ENCODE measurements at regions of chr3 and their contacts with region 1.

Region 1: DNA sequence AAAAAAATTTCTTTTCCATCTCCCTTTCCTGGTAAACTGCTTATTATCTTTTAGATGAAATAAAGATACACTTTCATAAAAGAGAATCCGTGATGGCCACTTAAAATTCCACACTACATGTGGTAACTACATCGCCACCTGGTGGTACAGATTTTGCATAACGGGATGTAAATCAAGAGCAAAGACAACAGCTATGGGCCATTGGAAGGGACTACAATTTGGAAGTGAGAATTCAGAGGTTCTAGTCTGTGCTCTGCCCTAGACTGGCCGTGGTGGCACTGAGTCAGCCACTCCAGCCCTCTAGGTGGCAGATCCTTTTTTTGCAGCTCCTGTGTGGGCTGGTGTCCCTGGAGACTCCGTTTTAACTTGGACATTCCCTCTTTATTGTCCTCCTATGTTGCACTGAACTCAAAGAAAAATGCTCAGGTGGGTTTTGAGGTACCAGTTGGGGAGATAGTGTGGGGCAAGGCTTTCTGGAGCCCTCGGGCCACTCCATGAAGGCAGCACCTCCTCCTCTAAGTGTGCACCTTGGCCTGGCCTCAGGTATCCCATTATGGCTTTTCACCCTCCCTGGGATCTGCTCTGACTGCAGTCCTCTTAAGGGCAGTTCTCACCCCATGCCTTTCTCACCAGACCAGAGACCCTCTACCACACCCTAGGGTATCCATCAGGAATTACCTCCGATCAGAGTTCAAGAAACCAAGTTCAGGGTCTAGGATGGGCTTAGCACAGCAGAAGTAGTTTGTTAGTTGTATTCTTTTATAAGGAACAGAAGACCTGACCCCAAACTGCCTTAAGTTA is 54.9 kb downstream of the SPSB4 start:
- DNase-seq: peak; percentile 74
- ATAC-seq: peak; percentile 73
- H3K4me3 ChIP-seq: no peak overlapping the region
- H3K27ac ChIP-seq: no peak overlapping the region
- H3K4me1 ChIP-seq: 0 out of 2 replicates have a peak, but pooled peaks cover 8% of the 10 kb centered on the region
- H3K27me3 ChIP-seq: 0 out of 5 replicates have a peak, but pooled peaks cover 0 to 3% of the 10 kb centered on the region in 2 experiments
- CTCF ChIP-seq: peak; percentile 76
- EP300 ChIP-seq: no peak
- POLR2A ChIP-seq: no peak
- RAD21 ChIP-seq: 0 out of 2 replicates have a peak, but pooled peaks have one; percentile 34

Region 2: GRCh38 chr3:140898340-140899180 is 207.5 kb before region 1 on chr3:
- CTCF ChIA-PET with region 1: interaction called, 16 read pairs
- POLR2A ChIA-PET with region 1: no interaction called
- in situ Hi-C with region 1: loop called (anchors 10 kb)
- intact Hi-C with region 1: loop called (anchors 1 kb)
- DNase-seq: peak; percentile 58
- ATAC-seq: peak; percentile 77
- H3K4me3 ChIP-seq: no peak overlapping the region
- H3K27ac ChIP-seq: no peak overlapping the region
- H3K4me1 ChIP-seq: no peaks in the 10 kb centered on the region
- H3K27me3 ChIP-seq: no peaks in the 10 kb centered on the region; a peak in 1 of 5 replicates
- CTCF ChIP-seq: peak; percentile 76
- EP300 ChIP-seq: no peak
- POLR2A ChIP-seq: no peak
- RAD21 ChIP-seq: 0 out of 2 replicates have a peak, but pooled peaks have one; percentile 13

Region 3: DNA sequence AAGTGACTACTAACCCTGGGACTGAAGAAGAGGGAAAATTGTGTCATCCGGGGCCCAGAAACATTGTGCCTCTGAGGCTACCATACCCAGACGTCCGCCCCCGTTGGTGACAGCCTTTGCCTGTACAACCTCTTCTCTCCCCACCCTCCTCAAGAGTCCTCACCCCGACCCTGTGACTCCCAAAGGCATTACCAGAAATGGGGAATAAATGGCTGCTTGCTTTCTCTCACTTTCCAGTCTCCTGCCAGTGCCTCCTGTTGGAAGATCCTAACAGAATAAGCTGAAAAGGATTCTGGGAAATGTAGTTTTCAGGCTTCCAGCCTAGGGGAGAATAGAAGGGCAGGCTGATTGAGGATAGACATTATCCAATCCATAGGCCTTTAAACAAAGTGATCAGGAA is 195.2 kb before region 1 on chr3:
- CTCF ChIA-PET with region 1: no interaction called
- POLR2A ChIA-PET with region 1: no interaction called
- in situ Hi-C with region 1: no loop called
- intact Hi-C with region 1: loop called (anchors 5 kb)
- DNase-seq: no peak
- ATAC-seq: peak; percentile 59
- H3K4me3 ChIP-seq: no peak overlapping the region
- H3K27ac ChIP-seq: no peak overlapping the region
- H3K4me1 ChIP-seq: peaks cover 25% of the 10 kb centered on the region
- H3K27me3 ChIP-seq: 0 out of 5 replicates have a peak, but pooled peaks cover 0 to 9% of the 10 kb centered on the region in 2 experiments
- CTCF ChIP-seq: peak; percentile 16
- EP300 ChIP-seq: no peak
- POLR2A ChIP-seq: no peak
- RAD21 ChIP-seq: no peak

Region 4: GRCh38 chr3:141000027-141000663 is 105.9 kb before region 1 on chr3:
- CTCF ChIA-PET with region 1: interaction called, 9 read pairs
- POLR2A ChIA-PET with region 1: no interaction called
- in situ Hi-C with region 1: loop called (anchors 10 kb)
- intact Hi-C with region 1: loop called (anchors 1 kb)
- DNase-seq: peak; percentile 43
- ATAC-seq: peak; percentile 100
- H3K4me3 ChIP-seq: no peak overlapping the region
- H3K27ac ChIP-seq: no peak overlapping the region
- H3K4me1 ChIP-seq: no peaks in the 10 kb centered on the region
- H3K27me3 ChIP-seq: no peaks in the 10 kb centered on the region
- CTCF ChIP-seq: peak; percentile 87
- EP300 ChIP-seq: no peak
- POLR2A ChIP-seq: no peak
- RAD21 ChIP-seq: peak; percentile 65; the same call in 1 of the 2 replicates

Region 5: GRCh38 chr3:141011232-141011996 is 94.6 kb before region 1 on chr3:
- CTCF ChIA-PET with region 1: no interaction called
- POLR2A ChIA-PET with region 1: no interaction called
- in situ Hi-C with region 1: loop called (anchors 10 kb)
- intact Hi-C with region 1: loop called (anchors 1 kb)
- DNase-seq: peak; percentile 45
- ATAC-seq: peak; percentile 99
- H3K4me3 ChIP-seq: no peak overlapping the region
- H3K27ac ChIP-seq: no peak overlapping the region
- H3K4me1 ChIP-seq: no peaks in the 10 kb centered on the region
- H3K27me3 ChIP-seq: peaks cover 0 to 8% of the 10 kb centered on the region in 2 experiments; a peak in 2 of 5 replicates
- CTCF ChIP-seq: peak; percentile 90
- EP300 ChIP-seq: no peak
- POLR2A ChIP-seq: no peak
- RAD21 ChIP-seq: peak; percentile 57; the same call in 1 of the 2 replicates